ENCODE measurements at regions of chr19 and their contacts with region 1.

Region 1: GRCh38 chr19:43595999-43596841 is at the starts of genes IRGQ and ZNF576:
- DNase-seq: peak; percentile 100
- H3K4me3 ChIP-seq: peak within 1 kb of the TSS; percentile 75
- H3K27ac ChIP-seq: peak within 1 kb of the TSS; percentile 84
- H3K4me1 ChIP-seq: peaks cover 20% of the 10 kb centered on the region
- H3K27me3 ChIP-seq: no peaks in the 10 kb centered on the region
- CTCF ChIP-seq: no peak
- total RNA-seq, gene IRGQ: 19.9 to 24.6 TPM
- total RNA-seq, gene ZNF576: 15.4 to 27.1 TPM

Region 2: GRCh38 chr19:43532962-43533545 is 63.2 kb before region 1 on chr19 and contains the start of gene ZNF575:
- intact Hi-C with region 1: loop called (anchors 10 kb)
- DNase-seq: peak; percentile 92
- H3K4me3 ChIP-seq: peak within 1 kb of the TSS; percentile 53
- H3K27ac ChIP-seq: peak within 1 kb of the TSS; percentile 96
- H3K4me1 ChIP-seq: no peaks in the 10 kb centered on the region
- H3K27me3 ChIP-seq: no peaks in the 10 kb centered on the region
- CTCF ChIP-seq: no peak
- total RNA-seq, gene ZNF575: 6.4 to 11.3 TPM

Region 3: DNA sequence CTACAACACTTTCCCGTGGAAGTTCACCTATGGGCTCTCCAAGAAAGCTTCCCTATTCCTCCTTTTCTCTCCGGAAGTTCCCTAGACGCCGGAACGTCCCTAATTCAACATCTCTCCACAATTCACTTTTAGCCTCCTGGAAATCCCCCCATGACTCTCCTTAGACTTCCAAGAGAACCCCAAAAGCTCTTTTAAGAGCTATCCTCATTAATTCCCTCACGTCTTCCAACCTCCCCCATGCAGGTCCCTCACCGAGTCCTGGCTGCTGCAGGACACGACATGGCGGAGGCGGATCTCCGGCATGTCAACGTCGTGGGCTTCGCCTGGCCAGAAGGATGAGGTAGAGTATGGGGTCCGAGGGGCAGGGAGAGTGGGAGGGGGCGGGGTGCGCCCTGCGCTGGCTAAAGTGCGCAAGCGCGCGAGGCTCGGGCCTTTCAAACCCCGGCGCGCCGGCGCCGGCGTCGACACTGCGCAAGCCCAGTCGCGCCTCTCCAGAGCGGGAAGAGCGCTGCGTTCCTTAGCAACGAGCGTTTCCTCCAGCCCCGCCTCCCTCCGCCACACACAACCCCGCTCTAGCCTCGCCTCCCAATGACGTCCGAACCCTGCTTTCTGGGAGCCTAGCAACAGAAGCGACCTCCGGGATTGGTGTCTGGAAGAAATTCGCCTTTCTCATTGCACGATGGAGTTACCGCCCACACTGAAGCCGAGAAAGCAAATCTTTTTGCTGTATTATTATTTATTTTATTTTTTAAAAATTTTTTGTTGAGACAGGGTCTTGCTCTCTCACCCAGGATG is 20.9 kb before region 1 on chr19 and contains the starts of genes PINLYP and XRCC1:
- intact Hi-C with region 1: loop called (anchors 1 kb)
- DNase-seq: peak; percentile 97
- H3K4me3 ChIP-seq: peak within 1 kb of the TSS; percentile 80
- H3K27ac ChIP-seq: peak within 1 kb of the TSS; percentile 39
- H3K4me1 ChIP-seq: peaks cover 7% of the 10 kb centered on the region
- H3K27me3 ChIP-seq: no peaks in the 10 kb centered on the region
- CTCF ChIP-seq: no peak
- total RNA-seq, gene PINLYP: 0.52 to 2.4 TPM
- total RNA-seq, gene XRCC1: 22.3 to 40.7 TPM